Ovary (tissue), 10 donors: ENCODE measurements at regions of chr3 and their contacts with region 1.

Region 1: GRCh38 chr3:129942296-129942695 is 32.2 kb upstream of the TRH start:
- DNase-seq: peak; percentile 42 to 70 (median 53)
- H3K4me3 ChIP-seq: no peak overlapping the region
- H3K27ac ChIP-seq: no peak overlapping the region
- H3K4me1 ChIP-seq: peaks cover 3% of the 10 kb centered on the region
- H3K27me3 ChIP-seq: no peaks in the 10 kb centered on the region
- CTCF ChIP-seq: peak in 2 of 3 donors; percentile 49 to 54
- EP300 ChIP-seq: no peak
- POLR2A ChIP-seq: no peak

Region 2: DNA sequence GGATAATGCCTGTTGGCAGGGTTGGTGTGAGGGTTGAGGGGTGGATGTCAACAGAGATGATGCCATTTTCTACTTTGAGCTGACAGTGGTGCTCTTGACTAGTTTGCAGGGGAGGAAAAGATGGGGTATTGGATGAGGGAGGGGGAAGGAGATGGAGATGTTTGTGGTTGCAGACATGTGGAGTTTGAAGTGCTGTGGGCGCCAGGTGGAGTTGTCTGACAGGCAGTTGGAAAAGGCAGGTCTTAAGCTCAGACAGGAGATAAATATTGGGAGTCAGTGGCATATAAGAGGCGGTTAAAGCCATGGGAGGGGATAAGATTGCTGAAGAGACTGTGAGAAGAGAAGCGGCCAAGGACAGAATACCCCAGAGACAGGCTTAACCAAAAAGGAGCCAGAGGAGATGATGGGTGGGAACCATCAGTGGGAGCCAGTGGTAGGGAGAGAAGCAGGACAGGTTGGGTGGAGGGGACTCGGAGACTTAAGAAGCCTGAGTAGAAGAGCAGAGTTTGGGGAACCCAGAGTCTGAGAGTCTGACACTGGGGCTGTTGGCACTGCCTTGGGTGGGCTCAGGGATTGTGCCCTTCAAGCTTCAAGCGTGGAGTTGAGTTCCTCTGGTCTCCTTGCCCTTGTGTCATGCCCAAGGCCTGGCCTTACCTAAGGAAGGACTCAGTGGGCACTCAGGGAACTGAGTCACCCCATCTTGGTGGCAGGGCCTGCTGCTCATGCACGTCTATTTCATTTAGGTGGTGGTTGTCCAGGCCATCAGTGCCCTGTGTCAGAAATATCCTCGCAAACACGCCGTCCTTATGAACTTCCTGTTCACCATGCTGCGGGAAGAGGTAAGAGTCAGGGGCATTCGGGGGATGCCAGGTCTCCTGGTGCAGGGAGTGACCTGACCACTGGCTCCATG is 678.9 kb before region 1 on chr3:
- intact Hi-C with region 1: no loop called
- DNase-seq: peak in 1 of 5 donors; percentile 15
- H3K4me3 ChIP-seq: no peak overlapping the region
- H3K27ac ChIP-seq: no peak overlapping the region
- H3K4me1 ChIP-seq: no peaks in the 10 kb centered on the region
- H3K27me3 ChIP-seq: no peaks in the 10 kb centered on the region
- CTCF ChIP-seq: no peak
- EP300 ChIP-seq: no peak
- POLR2A ChIP-seq: no peak

Region 3: GRCh38 chr3:129777806-129778205 is 164.5 kb before region 1 on chr3:
- intact Hi-C with region 1: no loop called
- DNase-seq: no peak
- H3K4me3 ChIP-seq: no peak overlapping the region
- H3K27ac ChIP-seq: no peak overlapping the region
- H3K4me1 ChIP-seq: peaks cover 5% of the 10 kb centered on the region
- H3K27me3 ChIP-seq: no peaks in the 10 kb centered on the region
- CTCF ChIP-seq: no peak
- EP300 ChIP-seq: no peak
- POLR2A ChIP-seq: no peak

Region 4: GRCh38 chr3:129994883-129995559 is 52.7 kb after region 1 on chr3:
- intact Hi-C with region 1: loop called in 2 of 4 experiments (anchors 5 kb)
- DNase-seq: no peak
- H3K4me3 ChIP-seq: no peak overlapping the region
- H3K27ac ChIP-seq: no peak overlapping the region
- H3K4me1 ChIP-seq: no peaks in the 10 kb centered on the region
- H3K27me3 ChIP-seq: no peaks in the 10 kb centered on the region
- CTCF ChIP-seq: no peak
- EP300 ChIP-seq: no peak
- POLR2A ChIP-seq: no peak

Region 5: DNA sequence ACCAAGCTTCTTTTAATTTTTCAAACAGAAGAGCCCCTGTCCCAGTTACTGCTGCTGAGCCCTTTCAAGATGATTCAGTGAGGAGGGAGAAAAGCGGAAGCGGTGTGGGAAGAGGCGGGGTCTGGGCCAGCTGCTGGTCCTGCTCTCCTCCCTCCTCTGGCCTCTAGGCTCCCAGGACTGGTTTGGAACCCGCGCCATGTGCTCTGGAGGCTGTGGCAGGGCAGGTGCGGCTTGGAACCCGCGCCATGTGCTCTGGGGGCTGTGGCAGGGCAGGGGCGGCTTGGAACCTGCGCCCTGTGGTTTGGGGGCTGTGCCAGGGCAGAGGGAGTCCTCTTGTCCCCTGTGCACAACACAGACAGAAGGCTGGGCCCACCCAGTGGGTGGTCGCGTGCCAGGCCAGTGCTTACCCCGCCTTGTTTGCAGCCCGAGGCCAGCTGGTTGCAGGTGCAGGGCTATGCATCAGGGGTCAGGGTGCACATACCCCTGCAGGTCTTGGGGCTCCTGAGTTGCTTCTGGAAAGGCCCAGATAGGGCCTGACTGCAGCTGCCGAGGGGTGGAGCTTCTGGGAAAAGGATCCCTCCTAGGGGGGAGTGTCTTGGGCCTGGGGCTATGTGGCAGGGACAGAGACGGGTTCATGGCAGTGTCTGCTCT is 151.6 kb after region 1 on chr3:
- intact Hi-C with region 1: loop called in 2 of 4 experiments (anchors 10 kb)
- DNase-seq: no peak
- H3K4me3 ChIP-seq: no peak overlapping the region
- H3K27ac ChIP-seq: no peak overlapping the region
- H3K4me1 ChIP-seq: no peaks in the 10 kb centered on the region
- H3K27me3 ChIP-seq: no peaks in the 10 kb centered on the region
- CTCF ChIP-seq: no peak
- EP300 ChIP-seq: no peak
- POLR2A ChIP-seq: no peak

Region 6: DNA sequence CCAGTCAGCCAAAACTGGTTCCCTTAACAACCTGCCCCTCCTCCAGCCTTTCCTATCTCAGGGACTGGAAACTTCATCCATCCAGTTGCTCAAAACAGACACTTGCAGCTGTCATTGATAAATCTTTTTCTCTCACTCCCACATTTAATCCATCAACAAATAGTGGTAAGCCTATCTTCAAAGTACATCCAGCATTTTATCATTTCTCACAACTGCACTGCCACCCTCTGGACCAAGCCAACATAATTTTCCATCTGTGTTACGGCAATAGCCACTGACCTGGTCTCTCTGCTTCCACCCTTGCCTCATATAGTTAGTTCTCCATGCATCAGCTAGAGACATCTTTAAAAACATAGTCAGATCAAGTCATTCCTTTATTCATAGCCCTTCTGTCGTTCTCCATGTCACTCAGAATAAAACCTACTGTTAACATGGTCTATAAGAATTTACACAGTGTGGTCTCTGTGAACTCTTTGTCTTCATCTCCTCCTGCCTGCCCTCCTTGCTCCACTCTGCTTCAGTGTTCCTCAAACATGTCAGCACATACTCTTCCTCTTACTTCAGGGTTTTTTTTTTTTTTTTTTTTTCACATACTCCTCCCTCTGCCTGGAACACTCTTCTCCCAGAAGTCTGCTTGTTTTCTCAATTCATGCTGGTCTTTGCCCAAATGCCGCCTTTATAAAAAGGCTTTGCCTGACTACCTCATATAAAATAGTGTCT is 300.7 kb after region 1 on chr3:
- intact Hi-C with region 1: loop called in 1 of 4 experiments (anchors 5 kb)
- DNase-seq: peak in 3 of 5 donors; percentile 15 to 24 (median 22)
- H3K4me3 ChIP-seq: no peak overlapping the region
- H3K27ac ChIP-seq: no peak overlapping the region
- H3K4me1 ChIP-seq: no peaks in the 10 kb centered on the region
- H3K27me3 ChIP-seq: no peaks in the 10 kb centered on the region
- CTCF ChIP-seq: peak in 2 of 3 donors; percentile 14 to 24
- EP300 ChIP-seq: no peak
- POLR2A ChIP-seq: no peak